Activated B cell treated with CpG ODN at 0.5 μM for 24 hours (primary cell): ENCODE measurements at regions of chr1 and their contacts with region 1.

Region 1: GRCh38 chr1:198157241-198157846 is 546 bp downstream of the NEK7 start:
- DNase-seq: peak; percentile 73
- ATAC-seq: peak; percentile 50
- H3K4me3 Mint-ChIP-seq: peak overlapping the region; percentile 98
- H3K27ac Mint-ChIP-seq: peak overlapping the region; percentile 98
- H3K4me1 Mint-ChIP-seq: peaks cover 49% of the 10 kb centered on the region
- H3K27me3 Mint-ChIP-seq: no peaks in the 10 kb centered on the region
- CTCF ChIP-seq: no peak

Region 2: DNA sequence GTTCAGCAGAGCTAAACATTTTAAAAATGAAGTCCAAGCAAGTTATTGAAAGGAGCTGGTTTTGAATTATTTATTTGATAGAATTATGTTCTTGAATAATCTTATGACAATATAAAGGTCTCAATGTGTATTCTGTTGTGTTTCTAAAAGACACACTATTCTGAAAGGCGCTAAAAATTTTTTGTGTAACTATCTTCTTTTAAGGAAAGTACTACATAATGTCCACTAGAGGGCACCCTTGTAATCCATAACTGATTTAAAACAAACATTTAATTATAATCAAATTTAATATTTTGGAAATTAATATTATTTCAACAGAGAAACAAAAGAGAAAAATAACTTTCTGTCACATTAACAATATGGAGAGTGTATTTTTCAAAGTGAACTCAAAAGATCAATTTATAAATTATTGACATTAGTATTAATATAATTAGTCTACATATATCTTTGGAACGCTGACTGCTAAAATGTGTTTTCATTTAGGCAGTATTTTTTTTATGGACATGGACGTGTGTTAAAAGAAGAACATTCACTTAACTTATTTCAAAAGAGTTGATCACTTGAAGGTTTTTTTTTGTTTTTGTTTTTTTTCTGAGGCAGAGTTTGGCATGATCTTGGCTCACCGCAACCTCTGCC is 630.5 kb before region 1 on chr1:
- CTCF ChIA-PET with region 1: no interaction called
- POLR2A ChIA-PET with region 1: no interaction called
- intact Hi-C with region 1: loop called (anchors 5 kb)
- DNase-seq: no peak
- ATAC-seq: no peak
- H3K4me3 Mint-ChIP-seq: no peak overlapping the region
- H3K27ac Mint-ChIP-seq: no peak overlapping the region
- H3K4me1 Mint-ChIP-seq: no peaks in the 10 kb centered on the region
- H3K27me3 Mint-ChIP-seq: no peaks in the 10 kb centered on the region
- CTCF ChIP-seq: peak; percentile 45

Region 3: DNA sequence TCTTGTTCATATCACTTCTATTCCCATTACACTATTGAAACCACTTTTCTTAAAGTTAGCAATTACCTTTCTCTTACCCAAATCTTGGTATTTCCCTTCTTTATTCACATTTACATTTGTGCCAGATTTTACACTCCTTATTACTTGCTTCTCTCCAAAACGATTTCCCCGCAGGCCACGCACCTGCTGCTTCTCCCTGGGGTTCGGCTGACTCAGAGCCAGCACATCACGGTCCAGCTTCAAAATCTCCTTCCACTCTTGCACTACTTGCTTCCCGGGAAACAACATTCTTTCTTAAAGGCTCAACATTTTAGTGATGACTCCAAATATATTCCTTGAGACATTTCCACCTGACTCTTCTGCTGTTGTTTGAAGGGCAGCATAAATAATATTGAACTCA is 219.5 kb before region 1 on chr1:
- CTCF ChIA-PET with region 1: no interaction called
- POLR2A ChIA-PET with region 1: no interaction called
- intact Hi-C with region 1: no loop called
- DNase-seq: no peak
- ATAC-seq: no peak
- H3K4me3 Mint-ChIP-seq: no peak overlapping the region
- H3K27ac Mint-ChIP-seq: no peak overlapping the region
- H3K4me1 Mint-ChIP-seq: no peaks in the 10 kb centered on the region
- H3K27me3 Mint-ChIP-seq: peaks cover 15% of the 10 kb centered on the region
- CTCF ChIP-seq: no peak

Region 4: GRCh38 chr1:198088360-198089071 is 68.8 kb before region 1 on chr1:
- CTCF ChIA-PET with region 1: no interaction called
- POLR2A ChIA-PET with region 1: no interaction called
- intact Hi-C with region 1: loop called (anchors 2 kb)
- DNase-seq: no peak
- ATAC-seq: peak; percentile 42
- H3K4me3 Mint-ChIP-seq: no peak overlapping the region
- H3K27ac Mint-ChIP-seq: no peak overlapping the region
- H3K4me1 Mint-ChIP-seq: no peaks in the 10 kb centered on the region
- H3K27me3 Mint-ChIP-seq: peaks cover 6% of the 10 kb centered on the region
- CTCF ChIP-seq: no peak

Region 5: DNA sequence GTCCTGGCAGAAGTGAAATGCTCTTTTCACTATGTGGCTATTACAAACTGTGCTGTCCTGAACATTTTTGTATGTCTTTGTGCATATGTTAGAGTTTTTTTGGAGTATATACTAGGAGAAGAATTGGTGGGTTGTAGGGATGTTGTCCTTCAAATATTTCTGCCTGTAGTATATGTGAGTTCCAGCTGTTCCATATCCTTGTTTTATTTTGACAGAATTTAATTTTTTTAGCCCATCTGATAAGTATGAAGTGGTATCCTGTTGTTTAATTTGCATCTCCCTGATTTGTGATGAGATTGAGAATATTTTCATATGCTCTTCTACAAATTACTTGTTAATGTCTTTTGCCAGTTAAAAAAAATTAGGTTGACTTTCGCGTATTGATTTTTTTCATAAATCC is 33.8 kb after region 1 on chr1:
- CTCF ChIA-PET with region 1: no interaction called
- POLR2A ChIA-PET with region 1: no interaction called
- intact Hi-C with region 1: loop called (anchors 5 kb)
- DNase-seq: no peak
- ATAC-seq: no peak
- H3K4me3 Mint-ChIP-seq: no peak overlapping the region
- H3K27ac Mint-ChIP-seq: no peak overlapping the region
- H3K4me1 Mint-ChIP-seq: peaks cover 61% of the 10 kb centered on the region
- H3K27me3 Mint-ChIP-seq: no peaks in the 10 kb centered on the region
- CTCF ChIP-seq: no peak

Region 6: GRCh38 chr1:198534548-198535418 is 377.4 kb after region 1 on chr1:
- CTCF ChIA-PET with region 1: no interaction called
- POLR2A ChIA-PET with region 1: no interaction called
- intact Hi-C with region 1: loop called (anchors 5 kb)
- DNase-seq: no peak
- ATAC-seq: peak; percentile 56
- H3K4me3 Mint-ChIP-seq: peak overlapping the region; percentile 55
- H3K27ac Mint-ChIP-seq: peak overlapping the region; percentile 80
- H3K4me1 Mint-ChIP-seq: peaks cover 84% of the 10 kb centered on the region
- H3K27me3 Mint-ChIP-seq: no peaks in the 10 kb centered on the region
- CTCF ChIP-seq: no peak

Region 7: GRCh38 chr1:198638894-198639635 is 481.7 kb after region 1 on chr1 and contains the start of gene PTPRC:
- CTCF ChIA-PET with region 1: no interaction called
- POLR2A ChIA-PET with region 1: interaction called, 3 read pairs
- intact Hi-C with region 1: loop called (anchors 1 kb)
- DNase-seq: no peak
- ATAC-seq: peak; percentile 78
- H3K4me3 Mint-ChIP-seq: peak within 1 kb of the TSS; percentile 87
- H3K27ac Mint-ChIP-seq: peak within 1 kb of the TSS; percentile 95
- H3K4me1 Mint-ChIP-seq: peaks cover 68% of the 10 kb centered on the region
- H3K27me3 Mint-ChIP-seq: no peaks in the 10 kb centered on the region
- CTCF ChIP-seq: no peak
- total RNA-seq, gene PTPRC: 426 and 506 TPM in 2 replicates